Naive thymus-derived CD4-positive, alpha-beta T cell (primary cell): ENCODE measurements at regions of chr11 and their contacts with region 1.

Region 1: GRCh38 chr11:16738193-16738946 is at the start of gene C11orf58:
- DNase-seq: peak; percentile 87 to 98 (median 97)
- ATAC-seq: peak; percentile 97
- H3K4me3 ChIP-seq: peak within 1 kb of the TSS; percentile 92
- H3K4me3 Mint-ChIP-seq: peak within 1 kb of the TSS in 5 of 10 donors; percentile 72 to 87 (median 77)
- H3K27ac ChIP-seq: peak within 1 kb of the TSS; percentile 98
- H3K27ac Mint-ChIP-seq: peak within 1 kb of the TSS in 2 of 9 donors; percentile 83 to 97
- H3K4me1 ChIP-seq: peaks cover 28 to 33% of the 10 kb centered on the region in 2 donors
- H3K4me1 Mint-ChIP-seq: peaks cover 6 to 32% (median 21%) of the 10 kb centered on the region in 7 donors
- H3K27me3 ChIP-seq: no peaks in the 10 kb centered on the region
- H3K27me3 Mint-ChIP-seq: peaks cover 0 to 3% (median 0%) of the 10 kb centered on the region in 5 donors
- total RNA-seq, gene C11orf58: 116 to 168 (median 155) TPM

Region 2: DNA sequence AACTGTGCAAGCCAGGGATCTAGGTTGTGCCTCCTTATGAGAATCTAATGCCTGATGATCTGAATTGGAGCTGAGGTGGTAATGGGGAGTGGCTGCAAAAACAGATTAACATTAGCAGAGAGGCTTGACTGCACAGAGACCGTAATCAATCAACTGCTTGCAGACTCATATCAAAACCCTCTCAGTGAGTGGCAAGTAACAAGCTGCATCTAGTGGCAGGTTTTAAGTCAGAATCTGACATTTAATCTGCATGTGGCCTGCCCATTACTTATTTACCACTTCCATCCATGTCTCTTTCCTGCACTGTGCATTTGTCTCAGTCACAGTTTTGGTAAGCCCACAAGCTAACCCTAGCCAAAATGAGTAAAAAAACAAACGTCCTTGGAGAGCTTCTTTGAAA is 11.3 kb after region 1 on chr11:
- CTCF ChIA-PET with region 1: no interaction called
- POLR2A ChIA-PET with region 1: interaction called, 26 read pairs
- intact Hi-C with region 1: no loop called
- DNase-seq: no peak
- ATAC-seq: no peak
- H3K4me3 ChIP-seq: no peak overlapping the region
- H3K4me3 Mint-ChIP-seq: no peak overlapping the region
- H3K27ac ChIP-seq: no peak overlapping the region
- H3K27ac Mint-ChIP-seq: peak overlapping the region in 3 of 9 donors; percentile 16 to 59 (median 50)
- H3K4me1 ChIP-seq: no peaks in the 10 kb centered on the region
- H3K4me1 Mint-ChIP-seq: peaks cover 7 to 42% (median 22%) of the 10 kb centered on the region in 7 donors
- H3K27me3 ChIP-seq: no peaks in the 10 kb centered on the region
- H3K27me3 Mint-ChIP-seq: no peaks in the 10 kb centered on the region

Region 3: DNA sequence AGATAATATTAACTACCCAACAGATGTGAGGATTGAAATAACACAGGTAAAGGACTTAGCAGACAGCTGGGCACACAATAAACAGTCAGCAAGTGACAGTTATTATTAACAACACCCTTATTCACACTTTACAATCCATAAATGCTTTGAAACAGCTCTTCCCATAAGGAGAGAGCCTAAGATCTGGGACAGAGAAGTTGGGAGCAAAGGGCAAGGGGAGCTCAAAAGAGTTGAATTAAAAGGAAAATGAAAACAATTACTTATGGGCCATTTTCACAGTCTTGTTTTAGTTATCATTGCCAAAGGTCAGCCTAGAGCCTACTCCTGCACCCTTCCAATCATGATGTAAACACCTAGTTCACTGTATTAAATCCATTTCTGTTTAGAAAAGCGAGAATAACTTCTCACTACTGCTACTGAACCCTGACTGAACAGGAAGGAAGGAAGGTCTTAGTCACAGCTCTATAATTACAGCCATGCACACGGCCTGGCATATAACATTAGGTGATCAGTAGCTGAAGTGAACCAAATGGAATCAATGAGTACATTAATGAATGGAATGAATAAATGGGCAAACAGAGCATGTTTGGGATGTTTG is 164.5 kb after region 1 on chr11:
- CTCF ChIA-PET with region 1: no interaction called
- POLR2A ChIA-PET with region 1: no interaction called
- intact Hi-C with region 1: no loop called
- DNase-seq: no peak
- ATAC-seq: no peak
- H3K4me3 ChIP-seq: no peak overlapping the region
- H3K4me3 Mint-ChIP-seq: peak overlapping the region in 1 of 10 donors; percentile 62
- H3K27ac ChIP-seq: no peak overlapping the region
- H3K27ac Mint-ChIP-seq: peak overlapping the region in 2 of 9 donors; percentile 62 to 85
- H3K4me1 ChIP-seq: no peaks in the 10 kb centered on the region
- H3K4me1 Mint-ChIP-seq: peaks cover 0 to 33% (median 5%) of the 10 kb centered on the region in 7 donors
- H3K27me3 ChIP-seq: no peaks in the 10 kb centered on the region
- H3K27me3 Mint-ChIP-seq: no peaks in the 10 kb centered on the region

Region 4: DNA sequence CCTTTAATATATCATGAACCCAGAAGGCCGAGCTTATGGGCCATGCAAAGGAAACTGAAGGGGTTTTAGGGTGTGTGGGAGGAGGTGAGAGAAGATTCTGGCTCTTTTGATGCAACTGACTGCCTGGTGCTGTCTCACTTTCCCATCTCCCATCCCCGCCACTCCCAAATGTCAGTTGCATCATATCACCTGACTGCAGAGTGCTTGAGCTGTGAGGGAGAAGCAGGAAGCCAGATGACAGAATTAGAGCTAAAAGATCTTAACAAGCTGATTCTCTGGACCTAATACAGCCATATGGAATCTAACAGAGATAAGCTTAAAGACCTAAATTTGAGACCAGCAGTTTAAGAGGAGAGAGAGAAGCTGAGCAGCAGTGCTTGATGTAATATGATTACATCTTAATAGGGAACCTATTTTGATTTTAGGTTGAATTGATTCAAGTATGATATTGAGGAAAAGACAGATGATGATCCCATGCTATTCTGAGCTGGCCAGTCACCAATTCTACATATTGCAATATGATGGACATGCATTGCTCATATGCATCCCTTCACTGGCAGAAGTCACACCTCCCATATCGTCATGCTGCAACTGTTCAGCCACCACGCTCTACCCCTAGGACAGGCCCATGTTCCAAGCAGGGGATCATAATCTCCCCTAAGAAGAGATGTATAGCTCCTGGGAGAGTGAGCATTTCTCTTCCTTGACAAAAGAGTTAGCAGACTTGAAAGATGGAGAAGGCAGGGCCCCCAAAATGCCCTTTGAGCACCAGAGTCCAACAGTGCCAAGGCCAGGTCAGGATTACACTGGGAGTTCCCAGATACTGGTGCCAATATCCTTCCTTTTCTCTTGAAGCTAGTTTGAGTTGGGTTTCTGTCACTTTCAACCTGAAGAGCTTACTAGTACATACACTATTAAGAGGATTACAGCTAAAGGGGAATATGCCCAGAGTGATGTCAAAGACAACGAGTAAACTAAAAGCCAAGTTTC is 230.9 kb after region 1 on chr11:
- CTCF ChIA-PET with region 1: no interaction called
- POLR2A ChIA-PET with region 1: no interaction called
- intact Hi-C with region 1: no loop called
- DNase-seq: no peak
- ATAC-seq: no peak
- H3K4me3 ChIP-seq: no peak overlapping the region
- H3K4me3 Mint-ChIP-seq: no peak overlapping the region
- H3K27ac ChIP-seq: no peak overlapping the region
- H3K27ac Mint-ChIP-seq: no peak overlapping the region
- H3K4me1 ChIP-seq: no peaks in the 10 kb centered on the region
- H3K4me1 Mint-ChIP-seq: peaks cover 0 to 11% (median 0%) of the 10 kb centered on the region in 7 donors
- H3K27me3 ChIP-seq: no peaks in the 10 kb centered on the region
- H3K27me3 Mint-ChIP-seq: no peaks in the 10 kb centered on the region

Region 5: DNA sequence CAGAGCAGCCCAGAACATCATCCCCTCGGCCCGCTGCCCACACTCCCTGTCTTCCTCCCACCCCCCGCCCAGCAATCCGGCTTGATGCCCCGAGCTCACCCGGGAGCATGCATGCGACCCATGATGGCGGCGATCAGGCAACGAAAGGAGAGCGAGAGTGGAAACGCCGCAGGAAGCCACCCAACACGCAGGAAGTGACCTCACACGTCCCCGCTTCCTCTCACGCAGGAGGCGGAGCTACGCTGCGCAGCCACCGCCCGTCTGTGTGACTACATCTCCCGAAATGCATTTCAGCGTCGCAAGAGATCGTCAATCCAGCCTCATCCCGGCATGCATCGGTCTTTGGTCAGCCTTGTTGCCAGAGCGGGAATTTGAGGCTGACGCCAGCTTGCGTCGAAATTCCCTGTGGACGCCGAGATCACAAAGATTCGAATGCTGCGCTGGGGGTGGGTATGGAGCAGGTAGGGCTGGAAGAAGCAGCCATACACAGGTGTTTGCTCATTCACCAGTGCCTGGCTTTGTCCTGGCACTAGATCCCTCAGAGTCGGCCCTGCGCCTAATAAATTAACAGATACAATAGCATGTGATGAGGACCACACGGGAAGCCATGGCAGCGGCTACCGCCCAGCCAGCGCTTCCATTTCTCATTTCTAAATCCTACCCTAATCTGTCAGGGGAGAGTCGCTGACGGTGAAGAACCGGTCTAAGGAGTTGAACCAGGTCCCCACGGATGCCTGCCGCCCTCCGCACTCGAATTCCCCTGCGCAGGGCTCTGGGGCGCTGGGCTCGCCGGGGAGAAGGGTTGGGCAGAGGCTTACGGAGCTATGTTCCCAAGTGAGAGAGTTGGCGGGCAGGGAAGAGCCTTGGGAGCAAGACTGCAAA is 339.4 kb after region 1 on chr11 and contains the start of gene RPS13:
- CTCF ChIA-PET with region 1: no interaction called
- POLR2A ChIA-PET with region 1: interaction called, 11 read pairs
- intact Hi-C with region 1: loop called (anchors 1 kb)
- DNase-seq: peak; percentile 76 to 95 (median 93)
- ATAC-seq: peak; percentile 98
- H3K4me3 ChIP-seq: peak within 1 kb of the TSS; percentile 87
- H3K4me3 Mint-ChIP-seq: peak within 1 kb of the TSS; percentile 91 to 99 (median 98)
- H3K27ac ChIP-seq: peak within 1 kb of the TSS; percentile 91
- H3K27ac Mint-ChIP-seq: peak within 1 kb of the TSS; percentile 96 to 99 (median 99)
- H3K4me1 ChIP-seq: peaks cover 12 to 27% of the 10 kb centered on the region in 2 donors
- H3K4me1 Mint-ChIP-seq: peaks cover 25 to 60% (median 37%) of the 10 kb centered on the region in 7 donors
- H3K27me3 ChIP-seq: no peaks in the 10 kb centered on the region
- H3K27me3 Mint-ChIP-seq: no peaks in the 10 kb centered on the region
- total RNA-seq, gene RPS13: 1,062 to 2,591 (median 2,234) TPM

Region 6: GRCh38 chr11:17276236-17277023 is 538.1 kb after region 1 on chr11 and contains the start of gene NUCB2:
- CTCF ChIA-PET with region 1: no interaction called
- POLR2A ChIA-PET with region 1: no interaction called
- intact Hi-C with region 1: loop called in 1 of 2 experiments (anchors 1 kb)
- DNase-seq: peak; percentile 92 to 98 (median 95)
- ATAC-seq: peak; percentile 96
- H3K4me3 ChIP-seq: peak within 1 kb of the TSS; percentile 78
- H3K4me3 Mint-ChIP-seq: peak within 1 kb of the TSS; percentile 83 to 99 (median 93)
- H3K27ac ChIP-seq: peak within 1 kb of the TSS; percentile 90
- H3K27ac Mint-ChIP-seq: peak within 1 kb of the TSS; percentile 88 to 93 (median 91)
- H3K4me1 ChIP-seq: peaks cover 17 to 28% of the 10 kb centered on the region in 2 donors
- H3K4me1 Mint-ChIP-seq: peaks cover 19 to 48% (median 38%) of the 10 kb centered on the region in 7 donors
- H3K27me3 ChIP-seq: no peaks in the 10 kb centered on the region
- H3K27me3 Mint-ChIP-seq: no peaks in the 10 kb centered on the region
- total RNA-seq, gene NUCB2: 72.0 to 171 (median 145) TPM

Region 7: DNA sequence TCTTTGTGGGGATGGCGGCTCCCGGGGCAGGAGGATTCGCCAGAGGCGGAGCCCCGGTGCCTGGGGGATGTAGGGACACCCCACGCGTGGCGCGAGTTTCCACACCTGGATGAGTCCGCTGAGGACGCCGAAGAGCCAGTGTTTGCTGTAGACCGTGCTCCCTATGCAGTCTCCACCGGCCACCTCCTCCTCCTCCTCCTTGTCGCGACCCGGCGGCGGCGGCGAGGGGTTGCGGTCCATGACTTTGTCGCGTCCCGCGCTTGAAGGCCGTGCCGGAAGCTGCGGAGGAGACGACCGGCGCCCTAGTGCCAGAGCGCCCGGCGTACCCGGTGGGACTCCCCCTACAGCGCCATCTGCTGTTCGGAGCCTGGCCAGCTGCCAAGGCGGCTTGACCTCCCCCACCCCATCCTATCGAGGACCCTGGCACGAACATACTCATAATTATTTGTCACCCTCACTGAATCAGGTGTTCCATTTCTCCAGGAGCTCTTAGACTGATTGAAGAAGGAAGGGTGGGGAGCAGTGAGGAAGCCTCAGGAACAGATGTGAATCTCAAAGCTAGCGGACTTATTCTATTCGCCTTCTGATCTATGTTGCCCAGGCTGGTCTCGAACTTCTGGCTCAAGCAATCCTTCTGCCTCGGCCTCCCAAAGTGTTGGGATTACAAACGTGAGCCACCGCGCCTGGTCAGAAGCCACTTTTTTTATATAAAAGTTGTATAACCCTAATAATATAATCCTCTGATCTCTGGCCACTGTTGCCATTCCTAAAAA is 1367.6 kb after region 1 on chr11 and contains the start of gene SAAL1:
- CTCF ChIA-PET with region 1: no interaction called
- POLR2A ChIA-PET with region 1: no interaction called
- intact Hi-C with region 1: loop called in 1 of 2 experiments (anchors 1 kb)
- DNase-seq: peak; percentile 80 to 95 (median 84)
- ATAC-seq: peak; percentile 99
- H3K4me3 ChIP-seq: peak within 1 kb of the TSS; percentile 93
- H3K4me3 Mint-ChIP-seq: peak within 1 kb of the TSS; percentile 84 to 95 (median 93)
- H3K27ac ChIP-seq: peak within 1 kb of the TSS; percentile 78
- H3K27ac Mint-ChIP-seq: peak within 1 kb of the TSS; percentile 77 to 93 (median 90)
- H3K4me1 ChIP-seq: peaks cover 14 to 15% of the 10 kb centered on the region in 2 donors
- H3K4me1 Mint-ChIP-seq: peaks cover 21 to 54% (median 42%) of the 10 kb centered on the region in 7 donors
- H3K27me3 ChIP-seq: no peaks in the 10 kb centered on the region
- H3K27me3 Mint-ChIP-seq: peaks cover 0 to 15% (median 0%) of the 10 kb centered on the region in 5 donors
- total RNA-seq, gene SAAL1: 16.0 to 25.3 (median 19.3) TPM